ENCODE measurements at regions of chr10 and their contacts with region 1.

Region 1: DNA sequence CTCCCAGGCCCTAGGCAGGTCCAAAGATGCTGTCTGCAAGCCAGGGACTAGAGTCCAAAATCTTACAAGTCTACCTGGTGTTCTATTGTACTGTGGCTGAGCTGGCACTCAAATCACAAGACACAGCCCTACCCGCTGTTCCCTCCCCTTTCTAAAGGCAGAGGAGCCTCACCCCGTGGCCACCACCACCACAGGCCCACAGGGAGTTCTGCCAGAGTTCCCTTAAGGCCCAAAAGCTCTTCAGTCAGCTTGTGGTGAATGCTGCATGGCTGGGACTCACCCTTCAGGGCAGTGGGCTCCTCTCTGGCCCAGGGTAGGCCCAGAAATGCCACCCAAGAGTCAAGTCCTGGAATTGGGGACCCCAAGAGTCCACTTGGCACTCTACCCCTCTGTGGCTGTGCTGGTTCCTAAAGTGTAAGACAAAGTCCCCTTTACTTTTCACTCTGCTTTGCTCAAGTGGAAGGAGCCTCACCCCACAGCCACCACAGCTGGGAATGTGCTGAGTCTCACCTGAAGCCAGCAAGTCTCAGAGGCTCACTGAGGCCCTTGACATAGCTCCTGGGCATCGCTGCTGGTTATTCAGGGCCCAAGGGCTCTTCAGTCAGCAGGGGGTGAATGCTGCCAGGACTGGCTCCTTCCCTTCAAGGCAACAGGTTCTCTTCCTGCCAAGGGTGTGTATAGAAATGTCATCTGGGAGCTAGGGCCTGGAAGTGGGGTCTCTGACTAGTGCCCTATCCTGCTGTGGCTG is 48.8 kb upstream of the PSAP start:
- DNase-seq: no peak
- ATAC-seq: no peak
- H3K4me3 Mint-ChIP-seq: no peak overlapping the region
- H3K27ac Mint-ChIP-seq: no peak overlapping the region
- H3K4me1 Mint-ChIP-seq: no peaks in the 10 kb centered on the region
- H3K27me3 Mint-ChIP-seq: no peaks in the 10 kb centered on the region

Region 2: GRCh38 chr10:71383972-71384687 is 515.7 kb before region 1 on chr10:
- CTCF ChIA-PET with region 1: no interaction called
- POLR2A ChIA-PET with region 1: no interaction called
- intact Hi-C with region 1: loop called in 1 of 2 experiments (anchors 5 kb)
- DNase-seq: peak; percentile 87
- ATAC-seq: peak; percentile 95
- H3K4me3 Mint-ChIP-seq: no peak overlapping the region
- H3K27ac Mint-ChIP-seq: no peak overlapping the region
- H3K4me1 Mint-ChIP-seq: no peaks in the 10 kb centered on the region
- H3K27me3 Mint-ChIP-seq: no peaks in the 10 kb centered on the region

Region 3: DNA sequence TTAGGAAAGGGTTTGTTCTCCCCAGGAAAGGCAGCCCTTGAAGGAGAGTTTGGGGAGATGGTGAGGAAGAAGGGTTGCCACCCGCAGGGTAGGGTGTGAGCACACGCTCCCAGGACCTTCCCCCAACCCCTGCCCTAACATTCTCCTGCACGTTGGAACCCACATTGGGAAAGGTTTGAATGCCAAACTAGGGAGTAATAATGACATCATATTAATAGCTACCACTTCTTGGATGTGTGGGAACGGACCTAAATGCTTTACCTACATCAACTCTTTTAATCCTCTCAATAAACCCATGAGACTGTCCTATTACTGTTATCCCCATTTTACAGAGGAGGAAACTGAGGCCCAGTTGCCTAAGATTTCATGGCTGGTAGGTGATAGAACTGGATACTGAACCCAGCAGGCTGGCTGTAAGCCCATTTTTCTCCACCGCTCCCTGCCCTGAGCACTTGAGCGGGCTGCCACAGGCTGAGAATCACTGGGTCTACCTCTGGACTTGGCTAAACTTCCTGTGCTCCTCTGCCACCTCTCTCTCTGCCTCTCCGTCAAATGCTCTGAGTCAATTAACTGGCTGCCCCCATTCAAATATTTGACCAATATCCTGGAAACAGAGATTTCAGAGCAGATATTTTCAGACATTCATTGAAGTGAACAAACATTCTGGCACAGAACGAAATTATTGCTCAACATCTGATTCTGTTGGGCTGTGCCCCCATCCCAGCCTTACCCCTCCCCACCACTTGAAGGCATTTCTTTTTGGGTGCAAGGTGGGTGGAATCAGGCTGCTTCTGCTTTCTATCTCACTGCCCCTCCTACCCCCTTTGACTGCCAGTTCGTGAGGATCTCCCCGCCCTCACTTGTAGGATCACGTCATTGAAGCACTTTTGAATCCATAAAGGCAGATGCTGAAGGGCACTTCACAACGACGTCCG is 310.0 kb before region 1 on chr10:
- CTCF ChIA-PET with region 1: no interaction called
- POLR2A ChIA-PET with region 1: no interaction called
- intact Hi-C with region 1: no loop called
- DNase-seq: no peak
- ATAC-seq: no peak
- H3K4me3 Mint-ChIP-seq: no peak overlapping the region
- H3K27ac Mint-ChIP-seq: no peak overlapping the region
- H3K4me1 Mint-ChIP-seq: no peaks in the 10 kb centered on the region
- H3K27me3 Mint-ChIP-seq: peaks cover 2% of the 10 kb centered on the region

Region 4: GRCh38 chr10:72729528-72729927 is 829.7 kb after region 1 on chr10:
- CTCF ChIA-PET with region 1: no interaction called
- POLR2A ChIA-PET with region 1: no interaction called
- intact Hi-C with region 1: no loop called
- DNase-seq: peak; percentile 11
- ATAC-seq: peak; percentile 87
- H3K4me3 Mint-ChIP-seq: no peak overlapping the region
- H3K27ac Mint-ChIP-seq: no peak overlapping the region
- H3K4me1 Mint-ChIP-seq: peaks cover 19% of the 10 kb centered on the region
- H3K27me3 Mint-ChIP-seq: no peaks in the 10 kb centered on the region

Measured in activated CD4-positive, alpha-beta T cell treated with anti-CD3 and anti-CD28 coated beads for 36 hours (primary cell).